A673 (cell line): ENCODE measurements at regions of chr11 and their contacts with region 1.

Region 1: GRCh38 chr11:65477149-65477965 is 21.5 kb upstream of the MALAT1 start:
- DNase-seq: peak; percentile 97
- H3K4me3 ChIP-seq: peak overlapping the region; percentile 68
- H3K27ac ChIP-seq: peak overlapping the region; percentile 96
- H3K4me1 ChIP-seq: peaks cover 21% of the 10 kb centered on the region
- H3K27me3 ChIP-seq: no peaks in the 10 kb centered on the region
- CTCF ChIP-seq: no peak

Region 2: DNA sequence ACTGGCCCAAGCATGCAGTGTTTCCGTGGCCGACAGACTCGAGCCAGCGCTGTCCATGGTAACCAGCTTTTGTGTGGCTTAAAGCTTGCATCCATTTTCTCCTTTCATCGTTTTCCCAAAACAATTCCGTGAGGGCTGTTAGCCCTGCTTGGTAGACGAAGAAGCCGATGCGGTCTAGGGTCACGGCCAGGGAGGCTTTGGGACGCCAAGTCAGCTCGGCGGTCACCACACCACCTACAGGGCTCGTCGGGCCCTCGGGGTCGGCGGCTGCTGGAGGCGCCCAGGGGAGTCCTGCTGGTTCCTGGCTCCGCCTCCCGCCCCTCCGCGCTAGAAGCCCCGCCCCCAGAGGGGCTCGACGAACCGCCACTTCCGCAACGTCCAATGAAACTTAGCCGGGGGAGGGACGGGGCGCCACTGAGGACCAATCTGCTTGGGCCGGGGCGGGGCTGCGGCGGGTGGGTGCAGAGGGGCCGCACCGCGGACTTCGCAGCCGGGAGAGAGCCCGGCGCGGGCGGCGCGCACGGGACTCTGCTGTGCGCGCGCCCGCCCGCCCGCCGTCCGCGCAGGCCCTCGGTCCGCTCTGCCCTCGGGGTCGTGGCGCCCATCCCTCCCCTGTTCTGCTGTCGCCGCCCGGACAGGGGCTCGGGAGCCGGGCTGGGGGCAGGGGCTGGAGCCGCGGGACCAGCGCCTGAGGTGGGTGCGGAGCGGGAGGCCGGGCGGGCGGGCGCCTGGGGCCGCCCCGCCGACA is 122.9 kb before region 1 on chr11 and contains the start of gene TIGD3:
- CTCF ChIA-PET with region 1: no interaction called
- POLR2A ChIA-PET with region 1: interaction called, 10 read pairs
- intact Hi-C with region 1: no loop called
- DNase-seq: peak; percentile 99
- H3K4me3 ChIP-seq: peak within 1 kb of the TSS; percentile 71
- H3K27ac ChIP-seq: peak within 1 kb of the TSS; percentile 55
- H3K4me1 ChIP-seq: no peaks in the 10 kb centered on the region
- H3K27me3 ChIP-seq: no peaks in the 10 kb centered on the region
- CTCF ChIP-seq: no peak
- total RNA-seq, gene TIGD3: 2.3 and 3.5 TPM in 2 replicates